ENCODE measurements at regions of chr7 and their contacts with region 1.

Region 1: GRCh38 chr7:106009403-106010226 is 46.6 kb downstream of the CDHR3 start:
- DNase-seq: peak; percentile 89
- H3K4me3 Mint-ChIP-seq: peak overlapping the region; percentile 32
- H3K27ac Mint-ChIP-seq: no peak overlapping the region
- H3K4me1 Mint-ChIP-seq: peaks cover 14% of the 10 kb centered on the region
- H3K27me3 Mint-ChIP-seq: no peaks in the 10 kb centered on the region
- CTCF ChIP-seq: peak; percentile 96

Region 2: GRCh38 chr7:105876091-105876963 is 133.3 kb before region 1 on chr7 and contains the start of gene ATXN7L1:
- CTCF ChIA-PET with region 1: interaction called, 5 read pairs
- POLR2A ChIA-PET with region 1: no interaction called
- intact Hi-C with region 1: loop called (anchors 1 kb)
- DNase-seq: peak; percentile 98
- H3K4me3 Mint-ChIP-seq: peak within 1 kb of the TSS; percentile 87
- H3K27ac Mint-ChIP-seq: peak within 1 kb of the TSS; percentile 97
- H3K4me1 Mint-ChIP-seq: peaks cover 5% of the 10 kb centered on the region
- H3K27me3 Mint-ChIP-seq: no peaks in the 10 kb centered on the region
- CTCF ChIP-seq: peak; percentile 50
- total RNA-seq, gene ATXN7L1: 8.1 and 10.0 TPM in 2 replicates

Region 3: GRCh38 chr7:105916603-105917002 is 93.0 kb before region 1 on chr7:
- CTCF ChIA-PET with region 1: no interaction called
- POLR2A ChIA-PET with region 1: no interaction called
- intact Hi-C with region 1: no loop called
- DNase-seq: peak; percentile 26
- H3K4me3 Mint-ChIP-seq: no peak overlapping the region
- H3K27ac Mint-ChIP-seq: no peak overlapping the region
- H3K4me1 Mint-ChIP-seq: peaks cover 4% of the 10 kb centered on the region
- H3K27me3 Mint-ChIP-seq: no peaks in the 10 kb centered on the region
- CTCF ChIP-seq: no peak

Region 4: DNA sequence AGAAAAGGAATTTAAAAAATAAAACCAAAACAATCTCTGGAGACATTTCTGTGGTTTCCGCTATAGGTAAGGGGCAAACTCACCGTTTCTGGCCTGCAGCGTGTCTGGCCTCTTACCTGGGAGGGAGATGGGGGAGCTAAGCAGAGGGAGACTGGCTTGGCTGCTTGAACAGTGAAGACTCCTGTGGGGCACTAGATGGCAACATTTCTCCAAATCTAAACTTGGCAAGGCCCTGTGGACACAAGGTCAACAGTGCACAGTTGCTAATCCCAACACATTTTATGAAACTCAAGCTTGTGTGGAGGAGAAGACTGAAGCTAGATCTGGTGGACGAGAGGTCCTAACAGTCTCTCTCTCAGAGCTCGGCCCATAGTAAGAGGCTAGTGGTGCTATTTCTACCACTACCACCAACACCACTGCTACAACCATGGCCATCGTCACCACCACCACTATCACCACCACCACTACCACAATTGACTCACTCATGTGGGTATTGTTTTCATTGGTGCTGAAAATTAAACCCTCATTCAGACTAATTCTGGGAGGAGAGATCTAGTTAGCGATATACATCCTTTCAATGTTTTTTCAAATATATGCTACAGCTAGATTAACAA is 74.9 kb before region 1 on chr7:
- CTCF ChIA-PET with region 1: interaction called, 3 read pairs
- POLR2A ChIA-PET with region 1: no interaction called
- intact Hi-C with region 1: loop called (anchors 1 kb)
- DNase-seq: peak; percentile 47
- H3K4me3 Mint-ChIP-seq: no peak overlapping the region
- H3K27ac Mint-ChIP-seq: no peak overlapping the region
- H3K4me1 Mint-ChIP-seq: peaks cover 9% of the 10 kb centered on the region
- H3K27me3 Mint-ChIP-seq: no peaks in the 10 kb centered on the region
- CTCF ChIP-seq: peak; percentile 24

Region 5: GRCh38 chr7:105999129-105999643 is 10.4 kb before region 1 on chr7:
- CTCF ChIA-PET with region 1: interaction called, 13 read pairs
- POLR2A ChIA-PET with region 1: no interaction called
- intact Hi-C with region 1: no loop called
- DNase-seq: no peak
- H3K4me3 Mint-ChIP-seq: no peak overlapping the region
- H3K27ac Mint-ChIP-seq: no peak overlapping the region
- H3K4me1 Mint-ChIP-seq: no peaks in the 10 kb centered on the region
- H3K27me3 Mint-ChIP-seq: peaks cover 17% of the 10 kb centered on the region
- CTCF ChIP-seq: no peak